Activated naive CD4-positive, alpha-beta T cell treated with anti-CD3 and anti-CD28 coated beads for 36 hours (primary cell): ENCODE measurements at regions of chr2 and their contacts with region 1.

Region 1: GRCh38 chr2:218898109-218898878 is 17.6 kb downstream of the WNT10A start:
- DNase-seq: peak; percentile 82
- H3K4me3 Mint-ChIP-seq: peak overlapping the region; percentile 45
- H3K27ac Mint-ChIP-seq: no peak overlapping the region
- H3K4me1 Mint-ChIP-seq: peaks cover 42% of the 10 kb centered on the region
- H3K27me3 Mint-ChIP-seq: peaks cover 27% of the 10 kb centered on the region

Region 2: GRCh38 chr2:217593732-217594131 is 1304.6 kb before region 1 on chr2:
- CTCF ChIA-PET with region 1: no interaction called
- intact Hi-C with region 1: no loop called
- DNase-seq: no peak
- H3K4me3 Mint-ChIP-seq: no peak overlapping the region
- H3K27ac Mint-ChIP-seq: no peak overlapping the region
- H3K4me1 Mint-ChIP-seq: peaks cover 9% of the 10 kb centered on the region
- H3K27me3 Mint-ChIP-seq: no peaks in the 10 kb centered on the region

Region 3: DNA sequence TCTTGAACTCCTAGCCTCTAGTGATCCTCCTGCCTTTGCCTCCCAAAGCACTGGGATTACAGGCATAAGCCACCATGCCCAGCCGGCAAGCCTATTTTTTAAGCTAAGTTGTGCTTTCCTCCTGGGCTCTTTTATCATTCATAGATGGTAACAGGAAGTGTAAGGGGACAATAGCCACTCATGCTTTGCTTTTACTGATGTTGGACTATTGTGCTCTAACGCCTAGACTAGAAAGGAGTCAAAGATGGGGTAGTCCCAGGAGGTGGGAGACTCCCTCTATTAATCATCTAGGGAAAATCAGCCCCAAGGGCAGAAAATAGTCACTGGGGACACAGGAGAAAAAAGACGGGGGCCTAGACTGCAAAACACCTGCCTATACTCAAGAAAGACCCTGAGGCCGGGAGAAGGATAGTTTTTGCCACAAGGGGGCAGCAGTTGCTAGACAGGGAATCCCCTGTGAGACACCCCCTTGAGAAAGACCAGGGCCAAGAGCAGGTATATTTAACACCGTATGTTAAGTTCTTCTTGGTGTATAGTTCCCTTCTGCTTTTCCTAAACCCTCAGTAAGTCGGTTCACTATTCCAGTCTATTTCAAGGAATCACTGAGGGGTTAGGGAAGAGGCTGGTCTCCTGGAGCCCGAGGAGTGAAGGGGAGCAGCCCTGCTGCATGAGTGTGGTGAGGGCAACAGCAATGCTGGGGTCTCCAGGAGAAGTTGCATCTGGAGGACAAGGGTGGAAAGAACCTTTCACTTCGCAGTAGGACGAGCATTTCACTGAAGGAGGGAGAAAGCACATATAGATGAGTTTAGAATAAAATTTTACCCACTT is 729.4 kb before region 1 on chr2:
- CTCF ChIA-PET with region 1: no interaction called
- intact Hi-C with region 1: no loop called
- DNase-seq: peak; percentile 79
- H3K4me3 Mint-ChIP-seq: no peak overlapping the region
- H3K27ac Mint-ChIP-seq: no peak overlapping the region
- H3K4me1 Mint-ChIP-seq: peaks cover 26% of the 10 kb centered on the region
- H3K27me3 Mint-ChIP-seq: no peaks in the 10 kb centered on the region

Region 4: GRCh38 chr2:218229239-218229638 is 669.1 kb before region 1 on chr2:
- CTCF ChIA-PET with region 1: no interaction called
- intact Hi-C with region 1: loop called (anchors 5 kb)
- DNase-seq: peak; percentile 66
- H3K4me3 Mint-ChIP-seq: peak overlapping the region; percentile 32
- H3K27ac Mint-ChIP-seq: peak overlapping the region; percentile 87
- H3K4me1 Mint-ChIP-seq: peaks cover 81% of the 10 kb centered on the region
- H3K27me3 Mint-ChIP-seq: no peaks in the 10 kb centered on the region

Region 5: GRCh38 chr2:218568190-218569037 is 329.9 kb before region 1 on chr2 and contains the starts of genes CNOT9 and USP37:
- CTCF ChIA-PET with region 1: no interaction called
- intact Hi-C with region 1: loop called (anchors 1 kb)
- DNase-seq: peak; percentile 100
- H3K4me3 Mint-ChIP-seq: peak within 1 kb of the TSS; percentile 91
- H3K27ac Mint-ChIP-seq: peak within 1 kb of the TSS; percentile 100
- H3K4me1 Mint-ChIP-seq: peaks cover 60% of the 10 kb centered on the region
- H3K27me3 Mint-ChIP-seq: no peaks in the 10 kb centered on the region
- total RNA-seq, gene CNOT9: 74.3 to 78.6 TPM
- total RNA-seq, gene USP37: 21.7 to 23.2 TPM

Region 6: GRCh38 chr2:218710687-218711549 is 187.4 kb before region 1 on chr2 and contains the start of gene TTLL4:
- CTCF ChIA-PET with region 1: interaction called, 6 read pairs
- intact Hi-C with region 1: loop called (anchors 1 kb)
- DNase-seq: peak; percentile 99
- H3K4me3 Mint-ChIP-seq: peak within 1 kb of the TSS; percentile 98
- H3K27ac Mint-ChIP-seq: peak within 1 kb of the TSS; percentile 80
- H3K4me1 Mint-ChIP-seq: peaks cover 15% of the 10 kb centered on the region
- H3K27me3 Mint-ChIP-seq: peaks cover 3% of the 10 kb centered on the region
- total RNA-seq, gene TTLL4: 23.7 to 24.7 TPM

Region 7: DNA sequence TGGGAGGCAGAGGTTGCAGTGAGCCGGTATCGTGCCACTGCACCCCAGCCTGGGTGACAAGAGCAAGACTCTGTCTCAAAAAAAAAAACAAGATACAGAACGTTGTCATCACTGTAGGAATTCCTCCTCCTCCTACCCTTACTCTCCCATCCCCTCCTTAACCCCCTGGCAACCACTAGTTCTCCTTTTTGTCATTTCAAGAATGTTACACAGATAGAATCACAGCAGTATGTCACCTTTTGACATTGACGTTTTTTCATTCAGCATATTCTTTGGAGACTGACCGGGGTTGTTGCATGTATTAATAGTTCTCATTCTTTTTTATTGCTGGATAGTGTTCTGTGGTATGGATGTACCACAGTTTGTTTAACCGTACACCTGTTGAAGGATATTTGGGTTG is 155.2 kb before region 1 on chr2:
- CTCF ChIA-PET with region 1: no interaction called
- intact Hi-C with region 1: no loop called
- DNase-seq: no peak
- H3K4me3 Mint-ChIP-seq: no peak overlapping the region
- H3K27ac Mint-ChIP-seq: no peak overlapping the region
- H3K4me1 Mint-ChIP-seq: peaks cover 20% of the 10 kb centered on the region
- H3K27me3 Mint-ChIP-seq: no peaks in the 10 kb centered on the region

Region 8: DNA sequence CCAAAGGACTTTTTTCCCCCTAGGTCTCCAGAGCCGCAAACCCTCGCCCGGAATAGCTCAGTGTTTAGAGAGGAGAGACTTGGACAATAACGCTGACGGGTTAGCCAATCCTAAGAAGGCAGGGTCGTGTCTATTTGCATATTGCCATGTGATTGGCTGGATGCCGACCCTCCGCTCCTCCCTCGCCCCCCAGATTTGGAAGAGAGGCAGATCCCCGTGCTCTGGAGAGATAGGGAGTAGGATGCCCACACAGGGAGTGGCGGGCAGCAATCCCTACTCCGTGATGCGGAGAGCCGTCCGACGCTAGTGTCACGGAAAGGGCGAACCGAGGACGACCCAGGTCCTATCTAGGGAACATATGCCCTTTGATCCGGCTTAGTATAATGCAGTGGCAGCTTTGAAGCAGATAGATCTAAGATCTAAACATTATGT is 37.3 kb before region 1 on chr2:
- CTCF ChIA-PET with region 1: interaction called, 84 read pairs
- intact Hi-C with region 1: no loop called
- DNase-seq: no peak
- H3K4me3 Mint-ChIP-seq: no peak overlapping the region
- H3K27ac Mint-ChIP-seq: no peak overlapping the region
- H3K4me1 Mint-ChIP-seq: peaks cover 13% of the 10 kb centered on the region
- H3K27me3 Mint-ChIP-seq: peaks cover 62% of the 10 kb centered on the region

Region 9: DNA sequence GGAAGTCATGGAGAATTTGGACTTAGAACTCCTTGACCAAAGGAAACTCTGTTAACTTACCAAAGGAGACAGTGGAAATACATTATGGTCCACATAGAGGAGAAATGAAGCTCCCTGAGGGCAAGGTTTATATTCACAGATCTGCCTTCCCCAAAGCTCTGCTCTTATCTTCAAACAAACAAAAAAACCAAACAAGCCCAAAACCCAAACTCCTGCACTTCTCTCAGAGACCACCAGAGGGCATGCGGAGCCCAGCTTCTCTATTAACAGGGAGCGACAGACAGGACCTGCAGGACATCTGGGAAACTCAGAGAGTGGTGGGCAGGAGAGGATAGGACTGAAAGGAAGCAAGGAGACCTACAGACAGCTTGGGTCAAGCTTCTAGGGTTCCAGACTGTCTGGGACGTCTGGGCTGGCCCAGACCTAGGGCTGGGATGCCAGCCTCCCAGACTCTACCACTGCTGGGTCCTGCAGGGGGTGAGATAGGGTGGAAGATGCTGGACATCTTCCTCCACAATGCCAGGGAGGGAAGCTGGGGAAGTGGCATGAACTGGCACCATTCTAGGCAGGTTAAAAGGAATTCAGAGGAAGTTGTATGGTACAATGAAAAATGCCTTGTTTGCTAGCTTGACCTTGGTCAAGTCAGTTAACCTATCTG is 21.6 kb before region 1 on chr2:
- CTCF ChIA-PET with region 1: interaction called, 947 read pairs
- intact Hi-C with region 1: loop called (anchors 1 kb)
- DNase-seq: peak; percentile 86
- H3K4me3 Mint-ChIP-seq: no peak overlapping the region
- H3K27ac Mint-ChIP-seq: no peak overlapping the region
- H3K4me1 Mint-ChIP-seq: peaks cover 39% of the 10 kb centered on the region
- H3K27me3 Mint-ChIP-seq: peaks cover 41% of the 10 kb centered on the region

Region 10: DNA sequence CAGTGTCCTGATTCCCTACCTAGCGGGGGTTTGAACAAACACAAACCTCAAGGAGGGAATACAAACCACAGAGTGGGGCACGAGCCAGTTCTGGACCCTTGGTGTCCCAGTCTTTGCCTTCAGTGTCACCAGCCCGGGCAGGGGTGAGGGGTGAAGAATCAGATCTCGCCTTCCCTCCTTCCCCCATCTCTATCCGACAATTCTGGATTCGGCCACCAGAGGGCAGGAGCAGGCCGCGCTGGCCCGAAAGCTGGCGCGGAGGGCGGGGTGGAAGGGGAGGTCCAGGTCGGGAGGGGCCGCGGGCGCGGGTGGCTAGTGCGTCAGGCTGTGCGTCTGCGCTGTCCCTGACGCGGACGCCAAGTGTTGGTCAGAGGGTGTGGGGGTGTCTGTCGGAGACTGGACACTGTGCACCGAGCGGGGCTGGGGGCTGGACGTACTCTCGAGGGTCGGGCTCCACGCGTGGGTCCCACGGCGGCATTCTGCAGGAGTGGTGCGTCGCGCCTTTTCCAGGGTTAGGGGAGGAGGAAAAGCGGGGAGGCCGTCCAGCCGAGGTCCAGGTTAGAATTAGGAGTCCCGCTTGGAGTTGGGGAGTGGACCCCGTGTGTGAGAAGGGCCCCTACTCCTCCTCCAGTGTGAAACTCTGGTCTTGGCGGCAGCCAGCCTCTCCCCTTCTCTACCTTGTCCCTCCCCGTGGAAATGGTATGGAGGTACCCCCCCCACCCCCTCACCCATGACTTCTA is 97.8 kb after region 1 on chr2:
- CTCF ChIA-PET with region 1: interaction called, 14 read pairs
- intact Hi-C with region 1: no loop called
- DNase-seq: peak; percentile 84
- H3K4me3 Mint-ChIP-seq: no peak overlapping the region
- H3K27ac Mint-ChIP-seq: no peak overlapping the region
- H3K4me1 Mint-ChIP-seq: peaks cover 14% of the 10 kb centered on the region
- H3K27me3 Mint-ChIP-seq: peaks cover 74% of the 10 kb centered on the region